Gastrocnemius medialis (tissue), 4 donors: ENCODE measurements at regions of chrX and their contacts with region 1.

Region 1: GRCh38 chrX:38939067-38939466 is 137.8 kb downstream of the MID1IP1 start:
- DNase-seq: peak; percentile 16 to 41
- ATAC-seq: peak; percentile 67 to 68
- H3K4me3 ChIP-seq: no peak overlapping the region
- H3K27ac ChIP-seq: peak overlapping the region; percentile 63 to 87 (median 80)
- H3K4me1 ChIP-seq: peaks cover 3 to 48% of the 10 kb centered on the region in 2 donors
- H3K27me3 ChIP-seq: no peaks in the 10 kb centered on the region
- CTCF ChIP-seq: no peak
- POLR2A ChIP-seq: peak in 1 of 2 donors; percentile 28

Region 2: DNA sequence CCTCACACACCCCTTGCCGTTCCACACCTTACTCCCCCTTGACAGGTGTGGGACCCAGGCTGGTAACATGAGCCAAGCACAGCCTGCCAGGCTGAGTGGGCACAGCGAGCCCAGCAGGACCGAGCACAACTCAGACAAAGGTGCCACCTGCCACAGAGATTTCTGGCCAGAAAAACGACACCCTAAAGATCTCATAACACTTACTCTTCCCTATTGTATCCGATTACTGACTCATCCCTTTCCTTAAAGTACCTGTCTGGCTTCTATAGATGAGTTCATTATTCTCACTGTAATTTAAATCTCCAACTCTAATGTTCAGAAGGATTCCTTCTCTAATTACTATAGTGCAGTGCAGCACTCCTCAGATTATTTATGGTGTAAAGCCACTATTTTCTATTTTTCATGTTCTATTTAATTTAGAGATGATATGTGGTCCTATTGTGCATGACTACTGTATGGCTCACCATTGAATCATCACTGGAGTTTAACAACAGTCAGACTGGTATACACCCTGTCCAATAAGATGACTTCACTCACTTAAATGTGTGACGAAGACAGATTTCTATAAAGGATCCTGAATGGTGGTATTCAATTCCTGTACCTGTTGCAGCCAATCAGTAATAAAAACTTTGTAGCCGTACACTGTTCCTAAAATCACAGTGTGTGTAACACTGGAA is 940.3 kb before region 1 on chrX:
- in situ Hi-C with region 1: no loop called
- intact Hi-C with region 1: no loop called
- DNase-seq: no peak
- ATAC-seq: no peak
- H3K4me3 ChIP-seq: no peak overlapping the region
- H3K27ac ChIP-seq: no peak overlapping the region
- H3K4me1 ChIP-seq: no peaks in the 10 kb centered on the region
- H3K27me3 ChIP-seq: no peaks in the 10 kb centered on the region
- CTCF ChIP-seq: no peak
- POLR2A ChIP-seq: no peak

Region 3: GRCh38 chrX:38850807-38851544 is 88.1 kb before region 1 on chrX:
- in situ Hi-C with region 1: no loop called
- intact Hi-C with region 1: loop called (anchors 5 kb)
- DNase-seq: no peak
- ATAC-seq: peak; percentile 86
- H3K4me3 ChIP-seq: no peak overlapping the region
- H3K27ac ChIP-seq: peak overlapping the region; percentile 76 to 85 (median 79)
- H3K4me1 ChIP-seq: peaks cover 4 to 6% of the 10 kb centered on the region in 2 donors
- H3K27me3 ChIP-seq: no peaks in the 10 kb centered on the region
- CTCF ChIP-seq: no peak
- POLR2A ChIP-seq: no peak

Region 4: GRCh38 chrX:39058724-39059123 is 119.7 kb after region 1 on chrX:
- in situ Hi-C with region 1: no loop called
- intact Hi-C with region 1: no loop called
- DNase-seq: no peak
- ATAC-seq: no peak
- H3K4me3 ChIP-seq: no peak overlapping the region
- H3K27ac ChIP-seq: no peak overlapping the region
- H3K4me1 ChIP-seq: no peaks in the 10 kb centered on the region
- H3K27me3 ChIP-seq: no peaks in the 10 kb centered on the region
- CTCF ChIP-seq: no peak
- POLR2A ChIP-seq: no peak